ENCODE measurements at regions of chr4 and their contacts with region 1.

Region 1: DNA sequence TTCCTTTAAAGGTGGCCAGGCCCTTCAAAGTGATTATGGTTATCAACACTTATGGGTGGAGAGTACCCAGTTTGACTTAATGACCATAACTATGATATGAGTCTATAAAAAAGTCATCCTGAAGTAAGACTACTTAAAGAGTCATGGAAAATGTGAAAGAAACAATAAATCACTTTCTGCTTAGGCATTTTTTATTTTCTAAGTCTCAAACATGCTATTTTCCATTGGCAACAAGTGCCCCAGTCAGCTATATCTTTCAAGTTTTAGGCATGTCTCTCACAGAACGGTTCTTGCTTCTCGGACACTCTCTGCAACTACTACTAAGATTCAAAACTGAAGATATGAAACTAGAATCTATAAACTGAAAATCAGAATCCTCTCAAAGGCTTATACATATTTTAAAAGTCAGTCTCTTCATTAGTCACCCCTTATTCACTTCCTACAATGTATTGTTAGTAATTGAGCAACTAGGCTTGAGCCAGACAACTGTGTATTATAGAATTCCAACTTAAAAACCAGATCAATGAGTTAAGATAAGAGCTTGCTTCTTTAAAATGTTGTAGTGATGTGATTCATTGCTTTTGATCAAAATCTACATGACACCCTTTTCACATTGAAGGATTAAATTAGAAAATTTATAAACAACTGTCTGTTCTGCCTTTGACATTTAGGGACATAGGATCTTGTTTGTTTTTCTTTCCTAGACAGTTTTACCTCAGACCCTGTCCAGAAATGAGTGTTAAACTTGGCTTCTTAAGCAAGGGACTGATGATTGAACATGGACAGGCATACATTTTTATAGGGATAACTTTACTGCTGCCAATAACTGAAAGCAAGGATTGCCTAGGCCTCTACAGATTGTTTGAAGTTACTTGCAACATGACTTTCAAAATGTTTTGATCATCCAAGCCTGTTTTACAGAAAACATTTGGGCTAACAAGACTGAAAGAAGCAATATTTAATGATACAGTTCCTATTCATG is 2.9 kb downstream of the ANTXR2 start:
- DNase-seq: no peak
- ATAC-seq: no peak

Region 2: DNA sequence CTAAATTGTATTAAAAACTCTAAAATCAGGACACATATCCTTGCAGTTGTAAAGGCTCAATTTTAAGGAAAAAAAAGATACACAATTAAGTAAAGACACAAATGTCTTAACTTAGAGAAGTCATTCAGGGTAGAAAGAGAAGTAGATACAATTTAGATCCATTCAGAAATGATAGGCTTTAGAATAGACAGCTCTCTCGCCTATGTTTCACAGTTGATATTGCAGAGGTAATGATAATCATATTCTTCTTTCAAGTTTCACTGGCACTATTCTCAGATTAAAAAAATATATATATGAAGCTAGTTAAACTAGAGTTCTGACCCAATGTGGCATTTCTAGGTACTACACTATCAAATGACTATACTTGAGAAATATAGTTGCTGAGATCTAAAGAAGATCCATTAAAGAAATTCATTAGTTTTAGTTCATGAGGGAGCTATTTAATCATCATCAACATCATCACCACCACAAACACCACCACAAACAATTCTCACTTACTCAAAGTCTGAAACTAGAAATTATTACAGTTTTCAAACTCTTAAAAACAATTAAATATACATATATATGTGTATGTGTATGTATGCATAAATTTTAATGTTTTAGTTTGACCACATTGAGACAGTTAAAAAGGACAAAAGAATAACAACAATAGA is 90.2 kb before region 1 on chr4:
- intact Hi-C with region 1: loop called (anchors 5 kb)
- DNase-seq: no peak
- ATAC-seq: no peak

Region 3: DNA sequence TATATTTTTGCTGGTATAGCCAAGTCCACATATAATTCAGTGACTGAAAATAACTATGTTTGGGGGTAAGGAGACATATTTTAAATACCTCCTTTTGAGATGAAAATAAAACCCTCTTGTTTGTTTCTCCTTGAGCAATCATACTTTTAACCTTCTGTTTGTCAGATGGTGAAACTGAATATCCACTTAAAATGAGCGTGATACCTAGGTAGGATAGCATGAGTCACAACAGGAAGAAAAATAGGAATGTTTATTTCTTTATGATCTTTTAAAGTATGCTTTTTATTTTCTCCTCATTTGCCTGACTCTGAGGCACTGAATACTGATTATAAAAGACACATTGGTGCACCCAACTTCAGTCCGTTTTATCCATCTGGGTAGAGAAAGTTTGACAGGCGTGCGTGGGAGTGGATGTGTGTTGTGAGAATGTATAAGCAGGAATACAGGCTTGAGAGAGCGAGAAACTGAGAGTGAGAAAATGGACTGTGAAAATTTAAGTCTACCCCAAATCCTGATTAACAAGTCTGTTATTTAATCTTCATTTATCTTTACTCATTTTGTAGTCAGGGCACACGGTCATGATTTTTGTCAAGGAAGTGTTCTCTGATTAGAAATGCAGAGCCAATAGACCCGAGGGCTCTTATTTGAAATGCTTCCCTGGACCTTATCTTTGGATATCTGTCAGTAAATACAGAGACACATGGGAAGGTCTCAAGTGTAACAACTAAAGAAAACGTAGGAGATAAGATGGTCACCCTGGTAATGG is 65.0 kb after region 1 on chr4:
- intact Hi-C with region 1: no loop called
- DNase-seq: no peak
- ATAC-seq: no peak

Region 4: DNA sequence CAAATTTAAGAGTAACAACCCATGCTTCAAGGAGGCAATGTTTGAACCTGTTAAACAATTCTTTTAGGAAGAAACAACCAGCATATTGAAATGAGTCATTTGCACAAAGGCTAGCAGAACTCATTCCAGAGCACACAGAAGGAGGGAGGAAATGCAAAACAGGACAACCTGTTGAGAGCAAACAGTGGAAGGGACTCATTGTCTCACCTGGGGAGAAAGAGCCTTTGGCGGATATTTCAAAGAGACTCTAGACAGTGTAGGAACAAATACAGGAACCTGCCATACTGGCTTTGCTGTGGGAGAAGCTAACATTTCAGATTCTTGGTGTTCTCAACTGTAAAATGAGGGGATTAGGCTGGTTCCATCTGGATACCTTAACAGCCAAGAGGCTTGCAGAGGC is 1416.4 kb after region 1 on chr4:
- intact Hi-C with region 1: loop called (anchors 5 kb)
- DNase-seq: no peak
- ATAC-seq: no peak

Measured in sciatic nerve (tissue), 2 donors.